ENCODE measurements at regions of chr16 and their contacts with region 1.

Region 1: DNA sequence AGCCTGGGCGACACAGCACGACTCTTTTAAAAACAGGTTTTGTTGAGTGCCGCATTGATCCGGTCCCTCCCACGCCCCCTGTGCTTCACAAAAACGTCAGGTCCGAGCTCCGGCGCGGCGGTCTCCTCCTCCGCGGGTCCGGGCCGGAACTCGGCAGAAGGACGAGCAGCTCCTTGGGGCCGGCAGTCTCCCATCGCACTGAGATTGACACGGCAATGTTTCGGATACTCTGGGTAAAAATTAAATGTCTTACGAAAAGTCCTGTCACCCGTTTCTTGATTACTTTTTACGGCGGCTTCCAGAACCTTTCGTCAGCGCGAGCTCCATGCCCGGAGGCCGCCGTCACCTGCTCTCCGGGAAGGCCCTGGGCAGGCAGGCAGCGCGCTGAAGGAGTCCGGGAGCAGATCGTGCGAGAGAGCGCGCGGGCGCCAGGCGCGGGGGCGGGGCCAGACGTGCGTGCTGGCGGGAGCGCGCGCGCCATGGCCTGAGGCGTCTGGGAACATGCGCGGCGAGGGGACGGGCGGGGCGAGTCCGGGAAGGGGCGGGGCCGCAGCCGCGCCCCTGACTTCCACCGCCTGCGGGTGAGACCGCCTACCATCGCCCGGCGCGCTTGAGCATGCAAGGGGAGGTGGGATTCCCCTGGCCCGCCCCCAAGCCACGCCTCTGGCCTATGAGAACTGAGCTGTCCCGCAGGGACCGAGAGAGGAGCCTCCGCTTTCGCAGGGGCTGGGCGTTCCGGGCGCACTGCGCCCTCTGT is 11.7 kb upstream of the SRL start:
- DNase-seq: peak; percentile 100
- ATAC-seq: peak; percentile 96
- H3K4me3 ChIP-seq: peak overlapping the region; percentile 22 to 90 (median 80)
- H3K4me3 Mint-ChIP-seq: peak overlapping the region; percentile 97
- H3K27ac ChIP-seq: peak overlapping the region; percentile 73 to 88
- H3K27ac Mint-ChIP-seq: peak overlapping the region; percentile 98
- H3K4me1 ChIP-seq: peaks cover 0 to 11% of the 10 kb centered on the region in 2 donors
- H3K4me1 Mint-ChIP-seq: peaks cover 6% of the 10 kb centered on the region
- H3K27me3 ChIP-seq: no peaks in the 10 kb centered on the region
- H3K27me3 Mint-ChIP-seq: no peaks in the 10 kb centered on the region
- CTCF ChIP-seq: no peak

Region 2: GRCh38 chr16:3938848-3939624 is 314.5 kb before region 1 on chr16:
- CTCF ChIA-PET with region 1: interaction called, 16 read pairs
- POLR2A ChIA-PET with region 1: no interaction called
- intact Hi-C with region 1: no loop called
- DNase-seq: peak; percentile 77
- ATAC-seq: peak; percentile 80
- H3K4me3 ChIP-seq: peak overlapping the region in 4 of 5 experiments; percentile 12 to 33 (median 20)
- H3K4me3 Mint-ChIP-seq: no peak overlapping the region
- H3K27ac ChIP-seq: no peak overlapping the region
- H3K27ac Mint-ChIP-seq: no peak overlapping the region
- H3K4me1 ChIP-seq: peaks cover 8 to 9% of the 10 kb centered on the region in 2 donors
- H3K4me1 Mint-ChIP-seq: no peaks in the 10 kb centered on the region
- H3K27me3 ChIP-seq: peaks cover 0 to 13% (median 3%) of the 10 kb centered on the region in 4 experiments
- H3K27me3 Mint-ChIP-seq: no peaks in the 10 kb centered on the region
- CTCF ChIP-seq: peak; percentile 97

Region 3: GRCh38 chr16:4183237-4184036 is 70.1 kb before region 1 on chr16:
- CTCF ChIA-PET with region 1: interaction called, 4 read pairs
- POLR2A ChIA-PET with region 1: no interaction called
- intact Hi-C with region 1: loop called (anchors 1 kb)
- DNase-seq: peak; percentile 90
- ATAC-seq: peak; percentile 95
- H3K4me3 ChIP-seq: peak overlapping the region; percentile 54 to 78 (median 69)
- H3K4me3 Mint-ChIP-seq: peak overlapping the region; percentile 84
- H3K27ac ChIP-seq: peak overlapping the region; percentile 27 to 62
- H3K27ac Mint-ChIP-seq: peak overlapping the region; percentile 59
- H3K4me1 ChIP-seq: peaks cover 4 to 15% of the 10 kb centered on the region in 2 donors
- H3K4me1 Mint-ChIP-seq: peaks cover 8% of the 10 kb centered on the region
- H3K27me3 ChIP-seq: no peaks in the 10 kb centered on the region
- H3K27me3 Mint-ChIP-seq: peaks cover 9% of the 10 kb centered on the region
- CTCF ChIP-seq: no peak

Region 4: GRCh38 chr16:4200000-4200780 is 53.4 kb before region 1 on chr16:
- CTCF ChIA-PET with region 1: no interaction called
- POLR2A ChIA-PET with region 1: no interaction called
- intact Hi-C with region 1: no loop called
- DNase-seq: peak; percentile 38
- ATAC-seq: no peak
- H3K4me3 ChIP-seq: no peak overlapping the region
- H3K4me3 Mint-ChIP-seq: no peak overlapping the region
- H3K27ac ChIP-seq: no peak overlapping the region
- H3K27ac Mint-ChIP-seq: no peak overlapping the region
- H3K4me1 ChIP-seq: no peaks in the 10 kb centered on the region
- H3K4me1 Mint-ChIP-seq: peaks cover 3% of the 10 kb centered on the region
- H3K27me3 ChIP-seq: no peaks in the 10 kb centered on the region
- H3K27me3 Mint-ChIP-seq: peaks cover 7% of the 10 kb centered on the region
- CTCF ChIP-seq: no peak

Region 5: DNA sequence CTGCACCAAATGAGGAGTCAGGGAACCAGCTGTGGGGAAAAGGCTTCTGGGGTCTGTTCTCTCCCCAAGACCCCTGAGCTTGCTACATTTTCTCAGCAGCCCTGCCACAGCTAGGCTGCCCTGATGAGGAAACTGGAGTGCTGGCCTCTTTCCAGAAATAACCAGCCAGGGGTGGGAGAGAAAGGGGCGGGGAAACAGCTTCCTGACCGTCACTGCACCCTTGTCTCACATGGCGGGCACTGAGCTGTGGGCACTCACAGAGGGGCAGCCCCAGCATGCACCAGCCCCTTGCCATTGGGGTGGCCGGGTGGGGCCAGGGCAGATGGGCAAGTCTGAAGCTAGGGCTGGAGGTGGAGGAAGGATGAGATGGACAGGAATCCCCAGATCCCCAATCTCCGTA is 14.6 kb before region 1 on chr16:
- CTCF ChIA-PET with region 1: no interaction called
- POLR2A ChIA-PET with region 1: no interaction called
- intact Hi-C with region 1: no loop called
- DNase-seq: no peak
- ATAC-seq: no peak
- H3K4me3 ChIP-seq: no peak overlapping the region
- H3K4me3 Mint-ChIP-seq: no peak overlapping the region
- H3K27ac ChIP-seq: no peak overlapping the region
- H3K27ac Mint-ChIP-seq: no peak overlapping the region
- H3K4me1 ChIP-seq: no peaks in the 10 kb centered on the region
- H3K4me1 Mint-ChIP-seq: no peaks in the 10 kb centered on the region
- H3K27me3 ChIP-seq: peaks cover 0 to 12% (median 4%) of the 10 kb centered on the region in 4 experiments
- H3K27me3 Mint-ChIP-seq: peaks cover 18% of the 10 kb centered on the region
- CTCF ChIP-seq: no peak

Region 6: DNA sequence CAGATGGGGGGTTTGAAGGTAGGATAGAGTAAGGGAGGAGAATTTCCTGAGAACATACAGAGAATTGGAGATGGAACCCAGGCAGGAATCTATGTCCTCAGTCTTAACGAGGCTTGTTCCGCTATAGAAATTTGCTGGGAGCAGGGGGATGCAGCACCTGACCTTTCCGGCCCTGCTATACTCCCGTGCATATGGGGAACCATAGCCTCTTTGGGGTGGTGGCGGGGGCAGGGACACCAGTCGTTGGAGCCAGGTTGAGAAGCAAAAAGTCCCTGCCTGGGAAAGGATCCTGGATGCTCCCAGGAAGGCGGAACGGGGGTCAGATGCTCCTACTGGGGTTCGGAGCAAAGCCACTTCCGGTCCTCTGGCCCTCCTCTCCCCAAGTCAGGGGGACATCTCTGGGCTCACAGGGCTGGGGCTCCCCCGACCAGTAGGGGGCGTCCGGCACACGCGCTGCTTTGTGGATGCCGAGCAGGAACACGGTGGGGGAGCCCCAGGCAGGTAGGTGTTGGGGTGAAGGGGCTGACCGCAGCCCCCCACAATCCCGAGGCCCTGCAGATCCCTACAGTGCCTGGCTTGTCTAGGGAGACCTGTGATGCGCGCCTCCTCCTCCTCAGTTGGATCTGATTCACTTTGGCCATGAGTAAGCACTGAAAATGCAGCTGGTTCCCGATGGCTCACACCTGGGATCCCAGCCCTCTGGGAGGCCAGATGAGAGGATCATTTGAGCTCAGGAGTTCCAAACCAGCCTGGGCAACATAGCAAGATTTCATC is 34.8 kb after region 1 on chr16:
- CTCF ChIA-PET with region 1: interaction called, 5 read pairs
- POLR2A ChIA-PET with region 1: no interaction called
- intact Hi-C with region 1: loop called (anchors 1 kb)
- DNase-seq: peak; percentile 87
- ATAC-seq: peak; percentile 98
- H3K4me3 ChIP-seq: no peak overlapping the region
- H3K4me3 Mint-ChIP-seq: no peak overlapping the region
- H3K27ac ChIP-seq: no peak overlapping the region
- H3K27ac Mint-ChIP-seq: no peak overlapping the region
- H3K4me1 ChIP-seq: peaks cover 7 to 8% of the 10 kb centered on the region in 2 donors
- H3K4me1 Mint-ChIP-seq: peaks cover 6% of the 10 kb centered on the region
- H3K27me3 ChIP-seq: peaks cover 0 to 3% (median 0%) of the 10 kb centered on the region in 4 experiments
- H3K27me3 Mint-ChIP-seq: peaks cover 20% of the 10 kb centered on the region
- CTCF ChIP-seq: peak; percentile 97

Region 7: GRCh38 chr16:4330277-4330874 is 76.8 kb after region 1 on chr16:
- CTCF ChIA-PET with region 1: interaction called, 18 read pairs
- POLR2A ChIA-PET with region 1: no interaction called
- intact Hi-C with region 1: no loop called
- DNase-seq: peak; percentile 74
- ATAC-seq: peak; percentile 72
- H3K4me3 ChIP-seq: no peak overlapping the region
- H3K4me3 Mint-ChIP-seq: no peak overlapping the region
- H3K27ac ChIP-seq: no peak overlapping the region
- H3K27ac Mint-ChIP-seq: no peak overlapping the region
- H3K4me1 ChIP-seq: peaks cover 14 to 18% of the 10 kb centered on the region in 2 donors
- H3K4me1 Mint-ChIP-seq: peaks cover 6% of the 10 kb centered on the region
- H3K27me3 ChIP-seq: peaks cover 0 to 24% (median 0%) of the 10 kb centered on the region in 4 experiments
- H3K27me3 Mint-ChIP-seq: peaks cover 3% of the 10 kb centered on the region
- CTCF ChIP-seq: peak; percentile 98

Measured in B cell (primary cell).